PC-3 (cell line): ENCODE measurements at regions of chr1 and their contacts with region 1.

Region 1: GRCh38 chr1:179293340-179294327 is at the start of gene SOAT1:
- DNase-seq: peak; percentile 82
- ATAC-seq: peak; percentile 84
- H3K4me3 ChIP-seq: peak within 1 kb of the TSS; percentile 85
- H3K27ac ChIP-seq: peak within 1 kb of the TSS; percentile 64
- H3K4me1 ChIP-seq: peaks cover 20% of the 10 kb centered on the region
- H3K27me3 ChIP-seq: no peaks in the 10 kb centered on the region
- CTCF ChIP-seq: no peak
- total RNA-seq, gene SOAT1: 8.6 and 10.5 TPM in 2 replicates

Region 2: GRCh38 chr1:179034720-179035119 is 258.9 kb before region 1 on chr1:
- CTCF ChIA-PET with region 1: no interaction called
- POLR2A ChIA-PET with region 1: no interaction called
- intact Hi-C with region 1: loop called (anchors 5 kb)
- DNase-seq: peak; percentile 48
- ATAC-seq: peak; percentile 34
- H3K4me3 ChIP-seq: no peak overlapping the region; the same call in 1 of the 2 replicates
- H3K27ac ChIP-seq: peak overlapping the region; percentile 55
- H3K4me1 ChIP-seq: peaks cover 76% of the 10 kb centered on the region
- H3K27me3 ChIP-seq: no peaks in the 10 kb centered on the region
- CTCF ChIP-seq: no peak

Region 3: DNA sequence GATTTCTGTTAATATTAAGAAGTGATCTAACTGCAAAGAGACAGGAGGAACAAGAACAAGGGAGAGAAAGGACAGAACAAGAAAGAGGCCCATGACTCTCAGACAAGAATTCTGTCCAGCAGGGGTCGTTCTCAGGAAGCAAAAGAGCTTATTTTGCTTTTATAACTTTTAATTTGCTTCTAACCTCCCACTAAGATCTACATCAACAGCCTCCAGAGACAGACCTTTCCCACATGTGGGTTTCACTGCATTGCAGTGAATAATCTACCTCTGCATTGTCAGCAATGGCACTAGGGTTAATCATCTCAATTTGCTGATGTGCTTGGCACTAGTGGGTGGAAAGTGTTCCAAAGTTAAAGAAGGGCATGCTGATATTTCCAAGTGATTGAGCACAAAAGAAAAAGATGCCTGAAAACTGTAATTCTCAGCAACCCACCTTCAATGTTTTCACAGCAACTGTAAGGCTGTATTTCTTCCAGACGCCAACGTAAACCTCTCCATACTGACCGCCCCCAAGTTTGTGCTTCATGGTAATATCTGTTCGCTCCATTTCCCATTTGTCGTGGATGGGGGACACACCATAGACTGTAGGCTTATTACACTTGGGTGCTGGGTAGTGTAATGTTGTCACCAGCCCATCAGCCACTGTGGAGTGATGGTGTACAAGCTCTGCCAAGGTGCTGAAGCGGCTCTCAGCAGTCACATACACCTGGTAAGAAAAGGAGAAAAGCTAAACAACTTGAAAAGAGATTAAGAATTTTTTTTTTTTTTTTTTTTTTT is 172.3 kb before region 1 on chr1:
- CTCF ChIA-PET with region 1: interaction called, 11 read pairs
- POLR2A ChIA-PET with region 1: no interaction called
- intact Hi-C with region 1: loop called (anchors 5 kb)
- DNase-seq: peak; percentile 68
- ATAC-seq: peak; percentile 12; the same call in 1 of the 2 replicates
- H3K4me3 ChIP-seq: no peak overlapping the region
- H3K27ac ChIP-seq: 0 out of 2 replicates have a peak overlapping the region, but pooled peaks have one; percentile 27
- H3K4me1 ChIP-seq: peaks cover 23% of the 10 kb centered on the region
- H3K27me3 ChIP-seq: no peaks in the 10 kb centered on the region
- CTCF ChIP-seq: peak; percentile 73

Region 4: GRCh38 chr1:179142889-179143299 is 150.7 kb before region 1 on chr1:
- CTCF ChIA-PET with region 1: no interaction called
- POLR2A ChIA-PET with region 1: interaction called, 4 read pairs
- intact Hi-C with region 1: loop called (anchors 1 kb)
- DNase-seq: peak; percentile 92
- ATAC-seq: peak; percentile 84
- H3K4me3 ChIP-seq: peak overlapping the region; percentile 79
- H3K27ac ChIP-seq: peak overlapping the region; percentile 97
- H3K4me1 ChIP-seq: peaks cover 28% of the 10 kb centered on the region
- H3K27me3 ChIP-seq: no peaks in the 10 kb centered on the region
- CTCF ChIP-seq: no peak

Region 5: DNA sequence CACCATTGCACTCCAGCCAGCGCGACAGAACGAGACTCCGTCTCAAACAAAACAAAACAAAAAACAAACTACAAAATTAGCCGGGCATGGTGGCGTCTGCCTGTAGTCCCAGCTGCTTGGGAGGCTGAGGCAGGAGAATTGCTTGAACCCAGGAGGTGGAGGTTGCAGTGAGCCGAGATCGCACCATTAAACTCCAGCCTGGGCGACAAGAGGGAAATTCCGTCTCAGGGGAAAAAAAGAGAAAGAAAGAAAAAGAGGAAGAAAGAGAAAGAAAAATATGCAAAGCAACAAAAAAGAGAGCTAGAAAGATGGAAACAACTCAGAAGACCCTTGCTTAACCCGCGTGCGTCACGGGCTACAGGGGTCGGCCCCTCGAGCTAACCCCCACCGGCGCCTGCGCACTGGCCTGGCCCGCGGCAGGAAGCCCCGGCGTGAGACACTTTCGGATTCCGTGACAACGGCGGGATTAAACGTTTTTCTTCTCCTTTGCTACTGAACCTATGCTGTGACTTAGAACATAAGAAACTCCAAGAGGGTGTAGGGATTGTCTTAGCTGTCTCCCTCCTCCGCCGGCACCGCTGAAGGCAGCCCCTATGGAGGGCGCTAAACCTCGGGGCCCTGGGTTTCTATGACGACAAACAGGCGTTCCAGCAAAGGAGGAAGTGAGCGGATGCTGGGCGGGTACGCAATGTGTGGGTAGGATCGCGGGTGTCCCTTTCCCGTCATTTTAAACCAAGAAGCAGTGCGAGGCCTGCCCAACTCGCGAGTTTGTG is 71.9 kb after region 1 on chr1 and contains the start of gene AXDND1:
- CTCF ChIA-PET with region 1: no interaction called
- POLR2A ChIA-PET with region 1: no interaction called
- intact Hi-C with region 1: loop called (anchors 1 kb)
- DNase-seq: peak; percentile 65
- ATAC-seq: peak; percentile 93
- H3K4me3 ChIP-seq: peak within 1 kb of the TSS; percentile 92
- H3K27ac ChIP-seq: peak within 1 kb of the TSS; percentile 84
- H3K4me1 ChIP-seq: 0 out of 2 replicates have a peak, but pooled peaks cover 4% of the 10 kb centered on the region
- H3K27me3 ChIP-seq: no peaks in the 10 kb centered on the region
- CTCF ChIP-seq: peak; percentile 33; the same call in 1 of the 2 replicates
- total RNA-seq, gene AXDND1: not detected in 2 replicates